Ascending aorta (tissue), 2 donors: ENCODE measurements at regions of chr5 and their contacts with region 1.

Region 1: DNA sequence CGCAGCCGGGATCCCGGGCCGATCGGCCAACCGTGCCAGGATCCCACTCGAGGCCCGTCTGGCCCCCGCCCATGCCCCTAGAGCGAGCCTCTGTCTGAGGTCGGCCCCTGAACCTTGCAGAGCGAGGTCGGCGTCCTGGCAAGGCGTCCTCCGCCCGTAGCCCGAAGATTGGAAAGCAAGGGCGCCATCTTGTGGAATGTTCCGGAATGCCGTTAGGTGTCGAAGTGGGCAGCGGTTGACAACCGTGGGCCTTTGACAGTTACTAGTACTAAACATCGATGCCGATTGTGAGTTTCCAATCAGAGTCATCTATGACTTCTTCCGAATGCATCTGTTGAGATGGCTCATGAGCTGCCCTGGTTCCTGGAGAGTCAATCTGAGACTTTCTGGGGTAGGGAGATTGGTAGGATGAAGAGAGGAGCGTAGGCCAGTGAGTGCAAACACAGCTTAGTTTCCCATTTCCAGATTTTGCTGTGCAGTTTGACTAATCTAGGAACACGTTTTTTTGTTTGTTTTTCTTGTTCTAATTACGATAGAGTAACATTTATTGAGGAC is 923 bp upstream of the PLK2 start:
- DNase-seq: peak in 1 of 2 donors; percentile 95
- H3K4me3 ChIP-seq: peak overlapping the region; percentile 83 to 92
- H3K27ac ChIP-seq: peak overlapping the region; percentile 98 to 99
- H3K4me1 ChIP-seq: peaks cover 0 to 6% of the 10 kb centered on the region in 2 donors
- H3K27me3 ChIP-seq: no peaks in the 10 kb centered on the region
- CTCF ChIP-seq: peak; percentile 66 to 78 (median 72)

Region 2: DNA sequence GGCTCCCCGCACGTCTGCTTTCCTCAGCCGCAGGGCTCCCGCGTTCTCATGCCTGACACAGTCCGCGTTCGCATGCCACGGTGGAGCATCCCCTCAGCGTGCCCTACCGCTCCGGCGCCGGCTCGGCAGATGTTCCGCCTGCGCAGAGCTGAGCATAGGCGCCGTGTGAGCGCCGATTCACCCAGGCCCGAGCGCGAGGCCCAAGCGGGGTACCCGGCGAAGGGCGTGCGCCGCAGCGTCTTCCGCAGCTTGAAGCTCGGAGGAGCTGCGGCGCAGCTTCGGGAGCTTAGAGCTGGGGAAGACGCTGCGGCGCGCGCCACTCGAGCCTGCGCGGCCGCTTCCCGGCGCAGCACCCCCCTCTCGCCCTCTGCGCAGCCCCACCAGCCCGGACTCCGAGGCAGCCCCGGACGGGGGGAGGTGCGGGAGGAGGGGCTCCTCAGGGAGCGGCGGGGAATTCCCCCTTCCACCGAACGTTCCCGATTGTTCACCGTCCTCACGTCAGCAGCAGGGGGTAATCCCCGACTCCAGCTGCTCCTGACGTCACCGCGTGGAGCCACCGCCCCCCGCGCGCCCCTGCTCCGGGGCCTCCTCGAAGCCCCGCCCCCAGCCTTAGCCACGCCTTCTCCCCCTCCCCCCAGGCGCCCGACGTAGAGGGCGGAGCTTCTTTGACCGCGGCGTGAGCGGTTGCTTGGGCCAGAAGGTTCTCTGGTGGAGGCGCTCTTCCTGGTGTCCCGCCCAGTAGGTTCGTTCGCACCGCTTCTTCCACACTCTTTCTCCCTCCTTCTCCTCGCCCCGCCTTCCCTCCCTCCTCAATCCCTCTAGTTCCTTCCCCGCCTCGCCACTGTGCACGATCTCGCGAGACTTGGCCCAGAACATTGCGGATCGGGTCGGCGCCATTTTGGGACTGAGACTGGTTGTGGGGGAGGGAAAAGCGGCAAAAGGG is 1287.4 kb before region 1 on chr5 and contains the start of gene GPBP1:
- intact Hi-C with region 1: loop called (anchors 2 kb)
- DNase-seq: peak; percentile 96 to 99
- H3K4me3 ChIP-seq: peak within 1 kb of the TSS; percentile 83 to 99
- H3K27ac ChIP-seq: peak within 1 kb of the TSS; percentile 99
- H3K4me1 ChIP-seq: peaks cover 0 to 17% of the 10 kb centered on the region in 2 donors
- H3K27me3 ChIP-seq: no peaks in the 10 kb centered on the region
- CTCF ChIP-seq: no peak
- total RNA-seq, gene GPBP1: 21.2 TPM

Region 3: GRCh38 chr5:57499262-57500050 is 961.4 kb before region 1 on chr5:
- intact Hi-C with region 1: loop called (anchors 5 kb)
- DNase-seq: no peak
- H3K4me3 ChIP-seq: peak overlapping the region in 1 of 2 donors; percentile 26
- H3K27ac ChIP-seq: peak overlapping the region in 1 of 2 donors; percentile 11
- H3K4me1 ChIP-seq: peaks cover 9 to 32% of the 10 kb centered on the region in 2 donors
- H3K27me3 ChIP-seq: no peaks in the 10 kb centered on the region
- CTCF ChIP-seq: peak in 2 of 3 experiments; percentile 38 to 63

Region 4: DNA sequence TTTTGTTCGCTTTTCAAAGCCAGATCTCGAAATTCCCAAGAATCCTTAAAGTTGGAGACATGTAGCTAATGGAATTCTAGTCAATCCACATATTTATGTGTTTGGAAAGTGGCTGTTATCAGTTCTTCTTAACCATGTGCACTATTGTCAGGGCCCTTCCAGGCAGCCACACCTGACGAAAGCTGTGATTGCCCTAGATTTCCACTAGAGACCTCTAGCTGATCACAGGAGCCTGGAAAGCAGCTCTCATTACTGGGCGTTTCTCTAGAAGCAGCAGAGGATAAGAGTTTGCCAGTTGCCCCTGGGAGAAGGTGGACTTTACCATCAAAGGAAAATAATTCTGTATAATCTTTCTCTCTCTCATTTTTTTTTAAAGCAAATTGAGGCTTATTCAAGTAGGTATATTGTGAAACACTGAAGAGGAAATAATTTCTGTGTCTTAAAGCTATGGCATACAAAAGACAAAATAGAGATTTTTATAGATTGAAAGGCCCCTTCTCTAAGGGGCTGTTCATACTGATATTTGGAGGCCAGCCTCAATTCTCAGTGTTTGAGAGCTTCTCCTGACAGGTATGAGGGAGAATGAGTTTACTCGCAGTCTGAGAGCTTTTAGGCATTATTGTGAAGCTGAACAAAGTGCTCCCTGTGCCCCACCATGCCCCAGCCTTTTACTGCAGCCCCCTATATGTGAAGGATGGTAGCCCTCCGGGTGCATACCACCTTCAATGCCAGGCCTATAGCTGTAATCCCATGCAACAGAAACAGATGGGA is 572.8 kb before region 1 on chr5:
- intact Hi-C with region 1: loop called (anchors 1 kb)
- DNase-seq: peak in 1 of 2 donors; percentile 65
- H3K4me3 ChIP-seq: no peak overlapping the region
- H3K27ac ChIP-seq: no peak overlapping the region
- H3K4me1 ChIP-seq: no peaks in the 10 kb centered on the region
- H3K27me3 ChIP-seq: no peaks in the 10 kb centered on the region
- CTCF ChIP-seq: peak; percentile 35 to 75 (median 61)

Region 5: DNA sequence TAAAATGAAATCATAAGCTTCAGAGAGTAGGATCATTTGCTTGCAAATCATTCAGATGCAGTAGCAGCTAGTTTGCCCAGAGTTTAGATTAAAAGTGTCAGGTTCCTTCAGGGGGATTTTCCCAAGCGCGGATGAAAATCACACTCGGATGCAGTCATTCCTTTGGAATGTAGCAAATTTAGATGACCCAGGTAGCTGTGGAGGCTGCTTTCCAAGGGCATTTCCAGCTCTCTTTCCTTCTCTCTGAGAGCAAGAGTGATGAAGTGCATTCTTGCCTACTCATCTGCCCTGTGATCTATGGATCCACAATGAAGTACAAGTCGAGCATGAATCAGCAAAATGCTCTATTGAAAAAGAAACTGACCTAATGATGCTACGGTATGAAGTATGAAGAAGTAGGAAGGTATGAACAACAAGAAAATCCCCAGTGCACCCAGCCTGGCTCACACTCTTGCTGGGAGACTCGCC is 201.1 kb before region 1 on chr5:
- intact Hi-C with region 1: loop called (anchors 5 kb)
- DNase-seq: no peak
- H3K4me3 ChIP-seq: peak overlapping the region in 1 of 2 donors; percentile 29
- H3K27ac ChIP-seq: peak overlapping the region; percentile 15 to 24
- H3K4me1 ChIP-seq: peaks cover 0 to 14% of the 10 kb centered on the region in 2 donors
- H3K27me3 ChIP-seq: no peaks in the 10 kb centered on the region
- CTCF ChIP-seq: no peak

Region 6: GRCh38 chr5:58940446-58940845 is 479.6 kb after region 1 on chr5:
- intact Hi-C with region 1: no loop called
- DNase-seq: no peak
- H3K4me3 ChIP-seq: no peak overlapping the region
- H3K27ac ChIP-seq: no peak overlapping the region
- H3K4me1 ChIP-seq: no peaks in the 10 kb centered on the region
- H3K27me3 ChIP-seq: no peaks in the 10 kb centered on the region
- CTCF ChIP-seq: no peak